Posterior cingulate gyrus (tissue), 11 donors: ENCODE measurements at regions of chr1 and their contacts with region 1.

Region 1: GRCh38 chr1:87084244-87084836 is 169.9 kb downstream of the HS2ST1 start:
- DNase-seq: no peak

Region 2: DNA sequence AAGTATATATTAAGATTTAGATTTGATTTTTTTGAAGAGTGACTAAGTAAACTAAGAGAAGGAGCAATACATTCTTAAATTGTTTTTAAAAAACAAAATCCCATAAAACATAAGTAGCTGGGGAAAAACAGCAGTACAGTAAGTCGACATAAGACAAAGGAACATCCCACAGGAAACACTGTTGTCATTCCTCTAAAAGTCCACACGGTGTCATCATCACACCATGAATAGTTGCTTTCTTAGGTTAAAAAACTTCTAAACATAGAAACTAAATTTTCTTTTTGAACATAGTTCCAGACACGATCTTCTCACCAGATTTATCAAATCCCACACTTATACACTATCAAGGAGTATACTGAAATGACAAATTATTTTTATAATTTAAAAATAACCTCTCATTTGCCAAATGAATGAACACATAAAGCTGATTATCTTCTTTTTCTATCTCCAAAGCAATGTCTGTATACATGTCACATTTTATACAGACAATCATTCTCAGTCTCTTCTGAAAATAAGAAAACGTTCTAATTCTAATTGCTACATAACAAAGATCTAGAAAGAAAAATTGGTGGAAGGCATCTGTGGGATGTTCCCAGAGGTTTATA is 704.0 kb before region 1 on chr1:
- intact Hi-C with region 1: loop called (anchors 10 kb)
- DNase-seq: no peak

Region 3: GRCh38 chr1:86833461-86834215 is 250.7 kb before region 1 on chr1:
- intact Hi-C with region 1: loop called (anchors 1 kb)
- DNase-seq: peak in 9 of 10 donors; percentile 12 to 87 (median 56)